ENCODE measurements at regions of chr21 and their contacts with region 1.

Region 1: GRCh38 chr21:42117229-42117966 is 46.3 kb downstream of the UMODL1 start:
- DNase-seq: peak; percentile 89
- H3K4me3 ChIP-seq: peak overlapping the region in 1 of 8 donors; percentile 22
- H3K27ac ChIP-seq: no peak overlapping the region
- H3K4me1 ChIP-seq: peaks cover 0 to 42% (median 26%) of the 10 kb centered on the region in 6 donors
- H3K27me3 ChIP-seq: peaks cover 0 to 84% (median 16%) of the 10 kb centered on the region in 7 donors
- CTCF ChIP-seq: peak; percentile 90 to 97 (median 96)
- POLR2A ChIP-seq: no peak

Region 2: DNA sequence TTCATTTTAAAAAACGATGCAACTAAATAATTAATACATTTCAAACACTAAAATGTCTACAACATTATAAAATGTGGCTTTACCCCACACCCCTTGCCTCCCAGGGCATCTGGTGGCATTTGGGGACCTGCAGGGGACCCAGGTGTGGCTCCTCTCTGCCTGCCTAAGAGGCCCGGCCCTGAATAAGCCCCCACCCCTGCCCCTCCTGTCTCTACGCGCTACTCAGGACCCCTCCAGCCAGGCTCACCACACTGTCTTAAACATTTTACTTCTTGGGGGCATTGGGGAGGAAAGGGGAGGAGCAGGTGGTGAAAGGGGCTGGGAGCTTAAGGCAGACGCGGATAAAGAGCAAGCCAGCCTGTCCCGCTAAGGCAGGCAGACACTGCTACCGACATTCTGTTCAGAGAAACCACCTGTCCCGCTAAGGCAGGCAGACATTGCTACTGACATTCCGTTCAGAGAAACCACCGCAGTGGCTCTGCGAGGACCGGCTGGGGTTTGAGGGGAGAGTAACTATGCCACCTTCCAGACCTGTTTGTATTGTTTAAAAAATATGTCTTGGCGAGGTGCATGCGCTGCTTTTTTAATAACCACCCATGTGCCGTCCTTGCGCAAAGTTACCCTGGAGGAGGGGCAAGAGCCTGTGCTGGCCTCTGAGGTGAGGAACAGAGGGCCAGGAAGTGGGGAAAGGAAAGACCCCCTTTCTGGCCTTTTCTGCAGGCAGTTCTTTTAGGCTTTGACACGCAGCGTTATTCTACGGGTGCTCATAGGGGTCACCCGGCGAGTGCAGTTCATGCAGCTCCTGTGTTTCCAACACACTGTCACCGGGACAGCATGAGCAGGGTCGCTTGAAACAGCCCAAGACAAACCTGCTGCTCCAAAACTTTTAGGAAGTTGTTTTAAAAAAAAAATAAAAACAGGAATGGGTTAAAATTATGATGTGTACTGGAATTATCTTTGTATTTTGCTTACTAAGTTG is 299.2 kb before region 1 on chr21:
- intact Hi-C with region 1: loop called (anchors 2 kb)
- DNase-seq: peak; percentile 41
- H3K4me3 ChIP-seq: no peak overlapping the region
- H3K27ac ChIP-seq: no peak overlapping the region
- H3K4me1 ChIP-seq: peaks cover 0 to 9% (median 8%) of the 10 kb centered on the region in 6 donors
- H3K27me3 ChIP-seq: no peaks in the 10 kb centered on the region
- CTCF ChIP-seq: no peak
- POLR2A ChIP-seq: no peak

Region 3: DNA sequence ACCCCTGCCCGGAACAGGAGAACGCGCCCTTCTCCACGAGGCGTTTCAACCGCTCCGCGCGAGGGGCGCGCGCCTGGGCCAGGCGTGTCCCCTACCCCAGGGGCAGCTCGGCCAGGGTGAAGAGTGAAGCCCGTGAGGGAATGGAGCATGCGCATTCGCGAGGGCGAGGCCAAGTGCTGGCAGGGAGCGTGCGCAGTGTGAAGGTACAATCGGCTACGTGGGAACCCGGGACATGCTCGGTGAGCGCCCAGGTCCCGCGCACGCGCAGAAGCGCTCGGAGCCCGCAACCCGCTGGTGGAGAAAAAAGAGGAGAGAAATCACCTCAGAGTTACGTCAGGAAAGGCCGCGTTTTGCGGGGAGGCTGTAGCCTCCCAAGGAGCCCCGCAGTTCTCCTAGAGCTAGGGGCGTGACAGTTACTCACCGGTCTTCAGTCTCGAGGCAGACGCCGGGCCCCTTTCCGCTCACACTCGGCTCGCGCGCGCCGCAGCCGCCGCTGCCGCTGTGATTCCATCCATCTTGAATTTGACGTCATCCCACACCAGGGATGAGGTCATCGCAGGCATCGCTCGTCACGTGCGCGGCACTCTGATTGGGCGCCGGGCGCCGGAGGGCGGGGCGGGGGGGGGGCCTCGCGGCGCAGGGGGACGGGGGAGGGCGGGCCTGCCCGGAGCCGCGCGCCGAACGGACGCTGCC is 107.4 kb before region 1 on chr21 and contains the start of gene ZBTB21:
- intact Hi-C with region 1: loop called (anchors 5 kb)
- DNase-seq: peak; percentile 99
- H3K4me3 ChIP-seq: peak within 1 kb of the TSS; percentile 66 to 94 (median 72)
- H3K27ac ChIP-seq: peak within 1 kb of the TSS; percentile 96 to 99 (median 98)
- H3K4me1 ChIP-seq: peaks cover 5 to 33% (median 23%) of the 10 kb centered on the region in 6 donors
- H3K27me3 ChIP-seq: peaks cover 0 to 9% (median 0%) of the 10 kb centered on the region in 7 donors
- CTCF ChIP-seq: no peak
- POLR2A ChIP-seq: peak in 2 of 3 donors; percentile 76 to 89
- total RNA-seq, gene ZBTB21: 10.6 to 21.7 (median 16.2) TPM